GM10248 (cell line): ENCODE measurements at regions of chr4 and their contacts with region 1.

Region 1: DNA sequence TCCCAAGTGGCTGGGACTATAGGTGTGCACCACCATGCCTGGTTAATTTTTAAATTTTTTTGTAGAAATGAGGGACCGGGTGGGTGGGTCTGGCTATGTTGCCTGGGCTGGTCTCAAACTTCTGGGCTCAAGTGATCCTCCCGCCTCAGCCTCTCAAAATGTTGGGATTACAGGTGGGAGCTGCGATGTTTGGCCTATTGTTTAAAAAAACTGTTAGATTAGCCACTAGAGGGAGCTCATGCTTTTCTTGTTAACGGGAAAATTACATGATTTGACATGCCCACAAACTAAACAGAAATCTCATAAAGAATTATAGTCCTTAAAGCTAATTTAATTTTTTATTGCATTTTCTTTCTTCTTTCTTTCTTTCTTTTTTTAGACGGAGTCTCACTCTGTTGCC is 5.0 kb upstream of the SDAD1 start:
- DNase-seq: peak; percentile 48
- CTCF ChIP-seq: peak; percentile 55

Region 2: DNA sequence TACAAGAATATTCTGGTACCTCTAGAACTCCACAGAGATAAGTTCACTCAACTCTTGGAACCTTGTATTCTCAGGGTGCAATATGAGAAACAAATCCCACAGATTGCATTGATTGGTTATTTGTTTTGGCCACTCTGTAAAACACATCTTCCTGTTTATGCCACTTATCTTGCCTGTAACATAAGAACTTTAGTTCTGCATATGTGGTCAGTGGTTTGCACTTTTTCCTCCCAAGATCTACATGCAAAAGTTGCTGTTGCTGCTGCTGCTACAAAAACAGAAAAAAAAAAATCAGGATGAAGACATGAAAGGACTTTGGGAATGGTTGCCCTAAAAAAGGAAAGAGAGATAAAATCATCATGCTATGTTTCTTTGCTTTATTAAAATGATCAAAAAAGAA is 430.2 kb before region 1 on chr4:
- CTCF ChIA-PET with region 1: no interaction called
- POLR2A ChIA-PET with region 1: no interaction called
- DNase-seq: no peak
- CTCF ChIP-seq: no peak

Region 3: DNA sequence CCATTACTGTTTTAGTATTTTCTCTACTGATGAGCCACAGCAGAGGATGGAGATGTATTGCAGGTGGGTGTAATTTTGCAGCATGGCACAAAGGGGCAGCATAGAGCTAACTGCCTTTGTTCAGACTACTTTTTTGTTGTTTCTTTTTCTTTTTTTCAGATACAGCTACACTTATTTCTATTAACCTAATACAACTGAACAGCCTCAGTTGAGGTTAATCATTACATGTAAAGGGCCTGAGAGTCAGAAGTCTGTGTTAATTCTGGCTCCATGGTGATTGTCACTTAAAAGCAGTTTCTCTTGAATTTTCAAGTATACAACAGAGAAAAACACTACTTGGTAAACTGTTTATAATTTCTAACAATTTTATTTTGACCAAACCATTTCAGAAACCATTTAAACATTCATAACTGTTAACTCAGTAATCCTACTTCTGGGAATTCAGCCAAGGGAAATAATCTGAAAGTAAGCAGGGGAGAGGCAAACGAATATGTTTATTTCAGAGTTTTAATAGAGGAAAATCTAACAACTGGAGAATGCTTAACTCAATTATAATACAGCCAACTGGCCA is 79.6 kb before region 1 on chr4:
- CTCF ChIA-PET with region 1: interaction called, 13 read pairs
- POLR2A ChIA-PET with region 1: interaction called, 3 read pairs
- DNase-seq: peak; percentile 65
- CTCF ChIP-seq: peak; percentile 73

Region 4: GRCh38 chr4:76010566-76010965 is 14.8 kb after region 1 on chr4:
- CTCF ChIA-PET with region 1: interaction called, 13 read pairs
- POLR2A ChIA-PET with region 1: no interaction called
- DNase-seq: no peak
- CTCF ChIP-seq: no peak

Region 5: GRCh38 chr4:76055016-76055415 is 59.3 kb after region 1 on chr4:
- CTCF ChIA-PET with region 1: interaction called, 32 read pairs
- POLR2A ChIA-PET with region 1: no interaction called
- DNase-seq: peak; percentile 67
- CTCF ChIP-seq: no peak

Region 6: GRCh38 chr4:76061982-76062381 is 66.3 kb after region 1 on chr4:
- CTCF ChIA-PET with region 1: interaction called, 43 read pairs
- POLR2A ChIA-PET with region 1: no interaction called
- DNase-seq: peak; percentile 53
- CTCF ChIP-seq: no peak

Region 7: DNA sequence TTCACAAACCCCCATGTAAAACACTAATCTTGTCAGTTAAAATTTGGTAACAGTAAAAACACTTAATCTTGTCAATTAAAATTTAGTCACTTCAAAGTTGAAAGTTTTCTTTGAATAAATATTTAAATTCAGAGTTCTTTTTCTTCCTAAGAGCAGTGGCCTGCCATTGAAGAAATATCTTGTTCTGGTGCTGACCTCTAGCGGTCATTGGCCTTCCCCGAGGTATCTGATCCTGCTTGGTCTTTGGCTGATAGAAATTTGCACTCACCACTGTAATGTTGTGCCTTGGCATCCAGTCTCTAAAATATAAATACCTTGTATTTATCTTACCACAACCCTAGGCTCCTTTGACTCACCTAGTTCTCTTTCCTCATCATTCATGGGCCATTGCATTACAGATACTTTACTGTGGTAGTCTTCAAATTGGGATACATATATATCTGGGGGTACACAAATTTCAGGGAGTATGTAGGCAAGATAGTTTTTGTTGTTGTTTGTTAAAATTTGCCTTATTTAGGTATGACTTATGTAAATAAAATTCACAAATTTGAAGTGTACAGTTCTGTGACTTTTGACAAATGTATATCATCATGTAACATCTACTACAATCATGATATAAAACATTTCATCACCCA is 72.0 kb after region 1 on chr4:
- CTCF ChIA-PET with region 1: interaction called, 43 read pairs
- POLR2A ChIA-PET with region 1: no interaction called
- DNase-seq: peak; percentile 70
- CTCF ChIP-seq: peak; percentile 86

Region 8: GRCh38 chr4:76087007-76087769 is 91.5 kb after region 1 on chr4:
- CTCF ChIA-PET with region 1: interaction called, 25 read pairs
- POLR2A ChIA-PET with region 1: no interaction called
- DNase-seq: peak; percentile 31
- CTCF ChIP-seq: peak; percentile 21